Motor neuron (in vitro differentiated cells): ENCODE measurements at regions of chr1 and their contacts with region 1.

Region 1: DNA sequence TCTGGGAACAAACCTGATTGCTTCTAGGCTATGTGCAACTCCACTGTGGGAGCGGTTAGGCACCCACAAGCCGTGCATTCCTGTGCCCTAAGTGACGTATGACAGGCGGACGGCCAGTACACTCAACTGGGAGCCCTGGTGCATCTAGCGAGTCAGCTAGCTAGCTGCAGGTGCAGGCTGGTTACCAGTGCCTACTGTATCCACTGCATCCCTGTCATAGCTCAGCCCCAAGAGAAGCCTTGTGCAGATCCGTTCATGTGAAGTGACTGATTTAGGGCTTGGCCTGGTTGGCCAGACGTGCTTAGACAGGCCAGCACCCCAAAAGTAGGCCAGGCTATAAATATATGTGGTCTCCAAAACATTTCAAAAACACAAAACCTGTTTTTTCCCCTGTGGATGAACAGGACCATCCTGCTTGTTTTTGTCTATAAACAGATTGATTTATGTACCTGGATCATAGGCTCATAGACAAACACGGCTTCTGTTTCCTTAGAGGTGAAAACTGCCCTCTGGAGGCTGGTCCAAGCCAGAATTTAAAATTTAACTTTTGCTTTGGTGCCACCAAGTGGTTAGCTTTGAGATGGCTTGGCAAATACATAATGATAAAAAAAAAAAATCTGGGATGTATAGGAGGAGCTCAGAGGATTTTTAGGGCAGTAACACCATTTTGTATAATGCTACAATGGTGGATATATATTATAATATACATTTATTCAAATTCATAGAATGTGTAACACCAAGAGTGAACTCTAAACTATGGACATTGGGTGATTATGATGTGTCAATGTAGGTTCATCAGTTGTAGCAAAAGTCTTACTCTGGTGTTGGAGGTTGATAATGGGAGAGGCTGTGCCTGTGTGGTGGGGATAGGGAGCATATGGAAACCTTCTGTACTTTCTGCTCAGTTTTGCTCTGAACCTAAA is 68.5 kb downstream of the GIPC2 start:
- ATAC-seq: peak; percentile 80 to 98 (median 92)
- H3K4me3 ChIP-seq: no peak overlapping the region
- H3K27ac ChIP-seq: no peak overlapping the region
- H3K4me1 ChIP-seq: no peaks in the 10 kb centered on the region

Region 2: DNA sequence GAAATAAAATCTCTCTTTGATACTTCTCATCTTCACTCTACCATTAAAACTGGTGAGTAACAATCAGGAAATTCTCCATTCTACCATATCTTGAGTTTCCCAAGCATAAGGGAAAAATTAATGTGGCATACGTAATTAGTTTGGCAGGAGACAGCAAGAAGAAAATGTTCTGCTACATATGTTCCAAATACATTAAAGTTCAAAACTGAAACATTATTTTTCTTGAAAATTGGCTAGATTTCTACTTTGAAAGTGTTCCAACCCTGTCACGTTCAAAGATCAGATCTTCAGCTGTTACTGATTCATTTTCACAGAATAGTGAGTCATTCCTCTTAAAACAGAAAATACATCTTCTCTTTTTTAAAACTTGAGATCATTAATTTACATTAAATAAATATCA is 943.6 kb before region 1 on chr1:
- in situ Hi-C with region 1: loop called in 1 of 9 experiments (anchors 25 kb)
- ATAC-seq: no peak
- H3K4me3 ChIP-seq: no peak overlapping the region
- H3K27ac ChIP-seq: no peak overlapping the region
- H3K4me1 ChIP-seq: no peaks in the 10 kb centered on the region

Region 3: DNA sequence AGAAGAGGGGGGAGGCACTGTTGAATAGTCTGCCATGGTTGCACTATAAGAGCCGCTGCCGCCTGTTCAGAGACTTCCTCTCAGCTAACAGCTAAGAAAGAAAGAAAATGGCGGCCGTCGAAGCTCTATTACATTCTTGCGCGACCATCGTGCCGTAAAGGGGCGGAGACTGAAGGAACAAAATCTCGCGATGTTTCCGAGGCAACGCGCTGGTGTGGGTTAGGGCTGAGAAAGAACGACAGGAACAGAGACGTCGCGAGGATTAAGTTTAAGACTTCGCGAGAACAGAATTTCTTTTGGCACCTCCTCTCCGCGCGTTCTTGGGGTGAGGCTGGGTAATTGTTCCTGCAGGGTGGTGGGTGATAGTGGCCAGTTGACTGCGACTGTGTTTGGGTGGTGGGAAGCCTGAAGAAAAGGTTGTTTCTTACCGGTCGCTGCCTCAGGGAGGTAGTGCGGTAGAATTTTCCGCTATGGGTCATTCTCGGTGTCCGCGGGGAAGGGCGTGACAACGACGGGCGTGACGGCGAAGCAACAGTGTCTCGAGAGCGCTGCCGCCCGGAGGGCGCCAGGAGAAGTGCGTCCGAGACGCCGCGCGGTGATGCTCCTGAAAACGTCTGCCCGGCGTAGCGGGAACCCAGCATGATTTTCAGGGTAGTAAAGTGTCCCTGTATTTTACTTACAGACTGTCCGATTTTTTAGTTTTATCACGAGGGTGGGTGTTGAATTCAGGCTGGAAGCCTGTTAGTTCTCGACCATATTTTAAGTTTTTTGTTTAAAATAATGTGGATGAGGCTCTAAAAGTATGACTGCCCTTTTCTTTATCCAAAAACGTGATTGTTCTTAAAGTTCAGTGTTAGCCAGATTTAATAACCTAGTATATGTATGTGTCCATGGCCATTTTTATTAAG is 135.1 kb before region 1 on chr1 and contains the start of gene FUBP1:
- in situ Hi-C with region 1: loop called in 1 of 9 experiments (anchors 25 kb)
- ATAC-seq: peak; percentile 78 to 92 (median 89)
- H3K4me3 ChIP-seq: peak within 1 kb of the TSS; percentile 70 to 93 (median 83)
- H3K27ac ChIP-seq: peak within 1 kb of the TSS; percentile 98
- H3K4me1 ChIP-seq: peaks cover 16 to 31% of the 10 kb centered on the region in 2 donors
- total RNA-seq, gene FUBP1: 54.7 to 380 (median 234) TPM

Region 4: DNA sequence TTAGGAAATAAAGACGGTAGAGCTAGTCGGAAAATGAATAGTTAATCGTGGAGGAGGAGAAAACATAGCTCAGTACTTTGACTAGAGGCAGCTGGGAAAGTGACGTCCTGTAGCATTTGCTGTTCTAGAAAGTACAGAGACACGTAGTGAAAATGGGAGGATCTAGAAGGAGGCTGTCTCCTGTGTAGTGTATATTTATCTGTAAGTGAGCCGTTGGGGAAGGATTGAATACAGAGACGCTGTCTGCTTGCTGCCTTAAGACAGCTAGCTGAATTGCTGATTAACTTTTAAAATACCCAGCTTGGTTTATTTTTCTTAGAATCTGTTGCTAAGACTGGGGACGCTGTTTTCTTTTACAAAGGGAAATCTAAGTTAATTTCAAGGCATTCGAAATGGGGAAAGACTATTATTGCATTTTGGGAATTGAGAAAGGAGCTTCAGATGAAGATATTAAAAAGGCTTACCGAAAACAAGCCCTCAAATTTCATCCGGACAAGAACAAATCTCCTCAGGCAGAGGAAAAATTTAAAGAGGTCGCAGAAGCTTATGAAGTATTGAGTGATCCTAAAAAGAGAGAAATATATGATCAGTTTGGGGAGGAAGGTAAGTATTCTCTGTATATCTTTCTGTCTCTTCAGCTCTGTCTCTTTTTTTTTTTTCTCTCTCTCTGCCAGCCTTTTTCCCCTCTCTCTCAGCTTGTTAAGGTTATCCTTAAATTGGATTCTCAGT is 109.4 kb before region 1 on chr1 and contains the start of gene DNAJB4:
- in situ Hi-C with region 1: loop called in 1 of 9 experiments (anchors 25 kb)
- ATAC-seq: peak; percentile 92 to 99 (median 98)
- H3K4me3 ChIP-seq: peak within 1 kb of the TSS; percentile 36 to 61 (median 45)
- H3K27ac ChIP-seq: peak within 1 kb of the TSS; percentile 88 to 95
- H3K4me1 ChIP-seq: peaks cover 2 to 28% of the 10 kb centered on the region in 2 donors
- total RNA-seq, gene DNAJB4: 30.8 to 102 (median 41.2) TPM